Transverse colon (tissue), 4 donors: ENCODE measurements at regions of chr16 and their contacts with region 1.

Region 1: DNA sequence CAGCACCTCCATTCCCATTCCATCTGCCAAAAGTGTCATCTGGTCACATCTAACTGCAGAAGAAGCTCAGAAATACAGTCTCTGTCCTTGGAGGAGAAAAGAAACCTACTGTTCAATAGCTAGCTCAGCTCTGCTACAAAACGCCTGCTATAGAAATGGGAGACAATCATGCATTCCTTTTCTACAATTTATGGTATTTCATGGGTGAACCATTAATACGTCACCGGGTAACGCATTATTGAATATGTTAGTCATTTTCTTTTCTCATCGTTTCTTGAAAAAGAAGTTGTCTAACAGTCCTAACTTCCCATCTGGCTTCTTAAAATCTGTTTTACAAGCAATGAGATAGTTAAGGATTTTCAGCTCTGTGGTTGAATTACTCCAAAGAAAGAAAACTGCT is 496.7 kb upstream of the RBFOX1 start:
- DNase-seq: no peak
- H3K4me3 ChIP-seq: no peak overlapping the region
- H3K27ac ChIP-seq: no peak overlapping the region
- H3K4me1 ChIP-seq: no peaks in the 10 kb centered on the region
- H3K27me3 ChIP-seq: no peaks in the 10 kb centered on the region
- CTCF ChIP-seq: no peak
- EP300 ChIP-seq: no peak
- POLR2A ChIP-seq: no peak

Region 2: DNA sequence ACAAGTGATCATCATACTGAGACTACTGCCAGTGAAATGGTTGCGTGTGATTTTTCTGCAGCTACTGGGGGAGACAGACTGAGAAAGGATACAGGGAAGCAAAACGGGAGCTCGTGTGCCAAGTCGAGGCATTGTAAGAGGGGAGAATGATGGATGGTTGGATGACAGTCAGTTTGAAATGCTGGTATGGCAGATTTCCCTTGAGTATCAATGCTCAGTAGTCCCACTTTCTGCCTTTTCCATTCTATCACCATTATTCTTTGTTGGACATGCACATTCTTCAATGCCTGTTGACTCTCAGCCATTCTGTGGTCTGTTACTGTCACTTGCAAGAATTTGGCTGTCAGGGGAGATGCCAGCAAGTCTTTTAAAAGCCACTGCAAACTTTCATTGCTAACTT is 13.9 kb before region 1 on chr16:
- in situ Hi-C with region 1: no loop called
- intact Hi-C with region 1: loop called (anchors 1 kb)
- DNase-seq: no peak
- H3K4me3 ChIP-seq: no peak overlapping the region
- H3K27ac ChIP-seq: no peak overlapping the region
- H3K4me1 ChIP-seq: no peaks in the 10 kb centered on the region
- H3K27me3 ChIP-seq: no peaks in the 10 kb centered on the region
- CTCF ChIP-seq: no peak
- EP300 ChIP-seq: no peak
- POLR2A ChIP-seq: no peak

Region 3: GRCh38 chr16:7101054-7101453 is 265.1 kb after region 1 on chr16:
- in situ Hi-C with region 1: no loop called
- intact Hi-C with region 1: no loop called
- DNase-seq: no peak
- H3K4me3 ChIP-seq: no peak overlapping the region
- H3K27ac ChIP-seq: no peak overlapping the region
- H3K4me1 ChIP-seq: no peaks in the 10 kb centered on the region
- H3K27me3 ChIP-seq: no peaks in the 10 kb centered on the region
- CTCF ChIP-seq: no peak
- EP300 ChIP-seq: no peak
- POLR2A ChIP-seq: no peak

Region 4: GRCh38 chr16:7182510-7183109 is 346.7 kb after region 1 on chr16:
- in situ Hi-C with region 1: no loop called
- intact Hi-C with region 1: no loop called
- DNase-seq: no peak
- H3K4me3 ChIP-seq: no peak overlapping the region
- H3K27ac ChIP-seq: no peak overlapping the region
- H3K4me1 ChIP-seq: no peaks in the 10 kb centered on the region
- H3K27me3 ChIP-seq: no peaks in the 10 kb centered on the region
- CTCF ChIP-seq: no peak
- EP300 ChIP-seq: no peak
- POLR2A ChIP-seq: no peak

Region 5: DNA sequence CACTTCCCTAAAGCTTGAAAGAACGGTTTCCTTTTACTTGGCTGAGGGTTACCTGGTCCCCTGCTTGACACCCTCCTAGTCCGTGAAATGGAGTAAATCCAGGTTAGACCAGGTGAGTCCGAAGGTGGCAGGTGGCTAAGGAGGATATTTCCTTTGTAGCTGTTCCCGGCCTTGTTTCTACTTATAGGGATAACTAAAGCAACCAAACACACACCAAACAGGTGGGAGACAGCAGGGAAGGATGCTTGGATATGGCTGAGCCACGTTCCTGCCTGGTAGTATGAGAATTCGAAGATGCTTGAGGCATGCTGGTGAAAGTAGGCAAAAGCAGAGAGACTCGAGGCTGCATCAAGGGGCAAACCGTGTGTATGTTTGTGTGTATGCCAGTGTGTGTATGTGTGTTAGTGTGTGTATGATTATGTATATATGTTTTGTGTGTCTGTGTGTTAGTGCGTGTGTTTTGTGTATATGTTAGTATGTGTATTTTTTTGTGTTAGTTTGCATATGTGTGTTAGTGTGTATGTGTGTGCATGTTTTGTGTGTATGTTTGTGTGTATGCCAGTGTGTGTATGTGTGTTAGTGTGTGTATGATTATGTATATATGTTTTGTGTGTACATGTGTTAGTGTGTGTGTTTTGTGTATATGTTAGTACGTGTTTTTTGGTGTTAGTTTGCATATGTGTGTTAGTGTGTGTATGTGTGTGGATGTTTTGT is 525.6 kb after region 1 on chr16:
- in situ Hi-C with region 1: no loop called
- intact Hi-C with region 1: no loop called
- DNase-seq: no peak
- H3K4me3 ChIP-seq: no peak overlapping the region
- H3K27ac ChIP-seq: no peak overlapping the region
- H3K4me1 ChIP-seq: peaks cover 0 to 4% (median 0%) of the 10 kb centered on the region in 4 donors
- H3K27me3 ChIP-seq: no peaks in the 10 kb centered on the region
- CTCF ChIP-seq: no peak
- EP300 ChIP-seq: no peak
- POLR2A ChIP-seq: no peak